WTC11 (cell line): ENCODE measurements at regions of chr11 and their contacts with region 1.

Region 1: GRCh38 chr11:63592975-63593395 is 21.2 kb downstream of the PLAAT3 start:
- DNase-seq: peak; percentile 49
- ATAC-seq: peak; percentile 82
- H3K4me3 Mint-ChIP-seq: no peak overlapping the region
- H3K27ac Mint-ChIP-seq: peak overlapping the region; percentile 34
- H3K4me1 Mint-ChIP-seq: peaks cover 12% of the 10 kb centered on the region
- H3K27me3 Mint-ChIP-seq: no peaks in the 10 kb centered on the region
- CTCF ChIP-seq: no peak

Region 2: GRCh38 chr11:63609536-63609935 is 16.6 kb after region 1 on chr11:
- CTCF ChIA-PET with region 1: interaction called, 4 read pairs
- POLR2A ChIA-PET with region 1: interaction called, 11 read pairs
- DNase-seq: no peak
- ATAC-seq: no peak
- H3K4me3 Mint-ChIP-seq: no peak overlapping the region
- H3K27ac Mint-ChIP-seq: peak overlapping the region; percentile 48; the same call in 1 of the 2 replicates
- H3K4me1 Mint-ChIP-seq: peaks cover 63% of the 10 kb centered on the region
- H3K27me3 Mint-ChIP-seq: peaks cover 33% of the 10 kb centered on the region
- CTCF ChIP-seq: no peak

Region 3: GRCh38 chr11:63635762-63636465 is 42.9 kb after region 1 on chr11:
- CTCF ChIA-PET with region 1: interaction called, 12 read pairs
- POLR2A ChIA-PET with region 1: interaction called, 6 read pairs
- DNase-seq: peak; percentile 82
- ATAC-seq: peak; percentile 96
- H3K4me3 Mint-ChIP-seq: no peak overlapping the region
- H3K27ac Mint-ChIP-seq: peak overlapping the region; percentile 2; the same call in 1 of the 2 replicates
- H3K4me1 Mint-ChIP-seq: peaks cover 4% of the 10 kb centered on the region
- H3K27me3 Mint-ChIP-seq: no peaks in the 10 kb centered on the region
- CTCF ChIP-seq: peak; percentile 69